GM10248 (cell line): ENCODE measurements at regions of chr17 and their contacts with region 1.

Region 1: GRCh38 chr17:2386400-2387085 is 14.3 kb downstream of the MNT start:
- DNase-seq: no peak
- CTCF ChIP-seq: no peak

Region 2: GRCh38 chr17:2323629-2324314 is 62.8 kb before region 1 on chr17:
- CTCF ChIA-PET with region 1: no interaction called
- POLR2A ChIA-PET with region 1: no interaction called
- DNase-seq: no peak
- CTCF ChIP-seq: no peak

Region 3: DNA sequence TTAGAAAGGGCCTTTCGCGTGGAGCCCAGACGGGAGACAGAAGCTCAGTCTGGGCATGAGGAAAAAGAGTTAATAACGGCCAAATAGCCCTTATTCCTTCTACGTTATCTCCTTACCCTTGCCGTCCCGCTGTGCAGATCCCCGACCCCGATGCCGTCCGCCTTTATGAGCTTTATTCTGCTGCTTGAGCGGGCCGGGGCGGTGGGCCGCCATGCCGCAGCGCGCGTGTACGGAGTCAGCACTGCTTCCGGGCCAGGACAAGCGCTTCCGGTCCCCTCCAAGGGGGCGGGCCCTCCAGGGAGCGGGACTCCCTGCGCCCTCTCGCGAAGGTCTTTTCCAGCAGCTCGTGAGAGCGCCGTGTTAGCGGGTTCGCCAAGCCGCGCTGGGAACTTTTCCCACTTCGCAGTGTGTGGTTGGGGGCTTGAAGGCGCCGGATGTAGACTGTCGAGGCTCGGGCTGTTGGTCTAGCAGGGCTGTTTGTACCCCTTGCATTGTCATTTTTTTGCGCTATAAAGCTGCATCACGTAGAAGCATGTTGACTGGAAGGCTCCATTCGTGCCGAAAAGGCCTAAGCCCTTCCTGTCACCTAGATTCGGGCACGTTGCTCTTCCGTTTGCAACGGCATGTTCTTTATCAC is 50.2 kb before region 1 on chr17 and contains the start of gene TSR1:
- CTCF ChIA-PET with region 1: interaction called, 12 read pairs
- POLR2A ChIA-PET with region 1: no interaction called
- DNase-seq: peak; percentile 98
- CTCF ChIP-seq: peak; percentile 45

Region 4: DNA sequence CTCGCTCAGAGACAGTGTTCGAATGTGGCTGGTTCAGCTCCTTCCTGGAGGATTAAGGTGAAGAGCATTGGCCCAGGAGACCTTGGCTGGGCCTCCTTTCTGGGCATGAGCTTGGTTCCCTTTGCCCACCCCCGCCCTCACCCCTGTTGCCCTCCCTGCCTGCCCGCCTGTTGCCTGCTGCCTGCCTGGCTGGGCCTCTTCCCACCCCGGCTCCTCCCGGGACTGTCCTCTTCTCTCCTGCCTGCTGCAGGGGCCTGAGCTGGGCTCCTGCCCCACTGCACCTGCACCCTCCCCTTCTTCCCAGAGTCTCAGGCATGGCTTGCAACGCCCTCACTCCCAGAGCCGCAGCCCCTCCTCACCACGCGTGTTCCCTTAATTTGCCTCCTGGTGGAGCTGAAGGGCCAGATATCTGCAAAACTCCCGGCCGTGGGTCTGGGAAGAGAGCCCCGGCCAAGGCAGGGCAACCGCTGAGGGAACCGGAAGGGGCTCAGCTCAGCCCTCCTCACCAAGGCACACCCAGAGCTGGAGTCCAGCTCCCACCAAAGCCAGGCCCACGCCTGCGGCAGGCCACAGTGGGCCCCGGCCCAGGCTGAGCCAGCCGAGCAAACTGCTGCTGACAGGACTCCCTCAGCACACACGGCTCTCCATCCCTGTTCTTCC is 16.9 kb before region 1 on chr17:
- CTCF ChIA-PET with region 1: interaction called, 39 read pairs
- POLR2A ChIA-PET with region 1: no interaction called
- DNase-seq: no peak
- CTCF ChIP-seq: no peak

Region 5: DNA sequence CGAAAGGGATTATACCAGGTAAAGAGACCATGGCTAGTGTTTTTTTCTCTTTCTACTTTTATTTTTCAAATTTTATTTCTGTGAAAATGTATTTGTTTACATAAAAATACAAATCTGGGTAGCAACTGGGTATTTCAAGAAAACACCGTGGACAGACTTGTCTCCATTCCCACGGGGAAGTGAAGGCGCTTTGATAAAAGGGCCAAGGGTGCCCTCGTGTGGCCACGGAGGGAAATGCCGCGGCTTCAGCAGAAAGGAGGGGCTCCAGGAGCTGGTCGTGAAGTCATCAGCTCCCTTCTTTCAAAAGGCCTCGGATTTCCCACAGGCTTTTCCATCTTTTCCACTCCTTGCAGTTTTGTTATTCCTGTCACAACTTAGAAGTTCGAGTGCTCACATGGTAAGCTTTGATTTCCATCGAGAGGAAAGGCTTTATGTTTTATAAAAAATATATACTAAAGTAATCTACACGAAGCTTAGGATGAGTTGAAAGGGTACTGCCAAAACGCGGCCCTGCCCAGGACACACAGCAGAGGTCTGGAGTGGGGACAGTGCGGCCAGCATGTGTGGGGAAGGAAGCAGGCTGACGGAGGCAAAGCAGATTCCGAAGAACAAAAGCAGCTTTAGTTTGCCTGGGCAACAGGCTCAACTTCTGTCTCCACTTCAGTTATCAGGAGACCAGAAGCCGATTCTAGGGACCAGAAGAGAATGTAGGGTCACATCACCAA is 29.6 kb after region 1 on chr17:
- CTCF ChIA-PET with region 1: interaction called, 404 read pairs
- POLR2A ChIA-PET with region 1: no interaction called
- DNase-seq: peak; percentile 88
- CTCF ChIP-seq: peak; percentile 96

Region 6: GRCh38 chr17:2435181-2435741 is 48.7 kb after region 1 on chr17:
- CTCF ChIA-PET with region 1: interaction called, 14 read pairs
- POLR2A ChIA-PET with region 1: no interaction called
- DNase-seq: no peak
- CTCF ChIP-seq: no peak